ENCODE measurements at regions of chr10 and their contacts with region 1.

Region 1: GRCh38 chr10:111360260-111360925 is 283.6 kb downstream of the ADRA2A start:
- DNase-seq: peak in 1 of 2 donors; percentile 13
- ATAC-seq: peak; percentile 49 to 72 (median 62)
- H3K4me3 ChIP-seq: no peak overlapping the region
- H3K27ac ChIP-seq: no peak overlapping the region
- H3K4me1 ChIP-seq: no peaks in the 10 kb centered on the region
- H3K27me3 ChIP-seq: peaks cover 0 to 3% (median 0%) of the 10 kb centered on the region in 3 donors
- CTCF ChIP-seq: peak; percentile 47

Region 2: GRCh38 chr10:111084366-111085255 is 275.8 kb before region 1 on chr10:
- intact Hi-C with region 1: loop called (anchors 5 to 10 kb)
- DNase-seq: no peak
- ATAC-seq: no peak
- H3K4me3 ChIP-seq: no peak overlapping the region
- H3K27ac ChIP-seq: no peak overlapping the region
- H3K4me1 ChIP-seq: no peaks in the 10 kb centered on the region
- H3K27me3 ChIP-seq: peaks cover 0 to 4% (median 0%) of the 10 kb centered on the region in 3 donors
- CTCF ChIP-seq: no peak

Region 3: GRCh38 chr10:111158595-111158994 is 201.8 kb before region 1 on chr10:
- intact Hi-C with region 1: no loop called
- DNase-seq: no peak
- ATAC-seq: no peak
- H3K4me3 ChIP-seq: no peak overlapping the region
- H3K27ac ChIP-seq: no peak overlapping the region
- H3K4me1 ChIP-seq: no peaks in the 10 kb centered on the region
- H3K27me3 ChIP-seq: peaks cover 0 to 10% (median 0%) of the 10 kb centered on the region in 3 donors
- CTCF ChIP-seq: no peak

Region 4: DNA sequence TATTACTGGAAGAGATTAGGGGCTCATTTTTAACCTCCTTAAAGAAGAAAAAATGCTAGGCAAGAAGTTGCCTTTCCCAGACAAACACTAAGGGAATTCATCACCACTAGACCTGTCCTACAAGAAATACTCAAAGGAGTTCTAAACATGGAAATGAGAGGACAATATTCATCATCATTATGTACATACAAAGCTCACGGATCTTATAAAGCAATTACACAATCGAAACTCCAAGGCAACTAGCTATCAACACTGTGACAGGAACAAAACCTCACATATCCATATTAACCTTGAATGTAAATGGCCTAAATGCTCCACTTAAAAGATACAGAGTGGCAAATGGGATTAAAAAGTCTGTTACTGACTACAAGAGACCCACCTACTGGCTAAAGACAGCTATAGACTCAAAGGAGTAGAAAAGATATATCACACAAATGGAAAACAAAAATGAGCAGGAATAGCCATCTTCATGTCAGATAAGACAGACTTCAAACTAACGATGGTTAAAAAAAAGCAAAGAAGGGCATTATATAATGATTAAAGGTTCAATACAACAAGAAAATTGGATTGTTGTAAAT is 36.9 kb before region 1 on chr10:
- intact Hi-C with region 1: no loop called
- DNase-seq: no peak
- ATAC-seq: no peak
- H3K4me3 ChIP-seq: no peak overlapping the region
- H3K27ac ChIP-seq: no peak overlapping the region
- H3K4me1 ChIP-seq: no peaks in the 10 kb centered on the region
- H3K27me3 ChIP-seq: no peaks in the 10 kb centered on the region
- CTCF ChIP-seq: peak; percentile 13

Measured in psoas muscle (tissue), 8 donors.